Heart right ventricle (tissue), 16 donors: ENCODE measurements at regions of chr21 and their contacts with region 1.

Region 1: GRCh38 chr21:45309069-45309986 is 21.6 kb upstream of the POFUT2 start:
- DNase-seq: peak; percentile 77 to 81
- ATAC-seq: peak; percentile 25 to 69 (median 50)
- H3K4me3 ChIP-seq: no peak overlapping the region
- H3K27ac ChIP-seq: peak overlapping the region; percentile 31 to 89 (median 64)
- H3K4me1 ChIP-seq: peaks cover 14 to 45% (median 35%) of the 10 kb centered on the region in 9 donors
- H3K27me3 ChIP-seq: no peaks in the 10 kb centered on the region
- CTCF ChIP-seq: peak; percentile 54 to 83 (median 74)

Region 2: DNA sequence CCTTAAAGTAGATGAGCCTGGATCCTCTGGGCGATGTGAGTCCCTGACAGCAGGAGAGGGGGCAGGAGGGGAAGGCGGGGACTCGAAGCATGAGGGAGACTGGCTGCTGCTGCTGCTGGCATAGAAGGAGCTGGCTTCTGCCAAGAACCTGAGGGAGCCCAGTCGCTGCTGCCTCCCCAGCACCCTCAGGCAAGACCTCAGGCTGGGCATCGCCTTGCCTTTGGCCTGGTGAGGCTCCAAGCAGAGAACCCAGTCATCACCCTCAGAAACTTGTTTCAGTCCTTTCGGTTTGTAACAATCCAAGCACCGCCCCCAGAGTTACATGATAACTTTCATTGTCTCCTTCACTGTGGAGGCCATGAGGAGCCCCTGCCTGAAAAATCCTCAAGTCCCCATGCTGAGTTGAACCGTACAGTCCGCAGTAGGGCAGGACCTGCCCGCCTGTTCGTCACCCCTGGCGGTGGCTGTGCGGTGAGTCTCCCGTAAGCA is 60.4 kb before region 1 on chr21:
- intact Hi-C with region 1: no loop called
- DNase-seq: no peak
- ATAC-seq: peak; percentile 38 to 73 (median 58)
- H3K4me3 ChIP-seq: peak overlapping the region in 7 of 10 donors; percentile 17 to 39 (median 24)
- H3K27ac ChIP-seq: no peak overlapping the region
- H3K4me1 ChIP-seq: peaks cover 0 to 10% (median 8%) of the 10 kb centered on the region in 9 donors
- H3K27me3 ChIP-seq: peaks cover 0 to 32% (median 13%) of the 10 kb centered on the region in 7 donors
- CTCF ChIP-seq: no peak

Region 3: DNA sequence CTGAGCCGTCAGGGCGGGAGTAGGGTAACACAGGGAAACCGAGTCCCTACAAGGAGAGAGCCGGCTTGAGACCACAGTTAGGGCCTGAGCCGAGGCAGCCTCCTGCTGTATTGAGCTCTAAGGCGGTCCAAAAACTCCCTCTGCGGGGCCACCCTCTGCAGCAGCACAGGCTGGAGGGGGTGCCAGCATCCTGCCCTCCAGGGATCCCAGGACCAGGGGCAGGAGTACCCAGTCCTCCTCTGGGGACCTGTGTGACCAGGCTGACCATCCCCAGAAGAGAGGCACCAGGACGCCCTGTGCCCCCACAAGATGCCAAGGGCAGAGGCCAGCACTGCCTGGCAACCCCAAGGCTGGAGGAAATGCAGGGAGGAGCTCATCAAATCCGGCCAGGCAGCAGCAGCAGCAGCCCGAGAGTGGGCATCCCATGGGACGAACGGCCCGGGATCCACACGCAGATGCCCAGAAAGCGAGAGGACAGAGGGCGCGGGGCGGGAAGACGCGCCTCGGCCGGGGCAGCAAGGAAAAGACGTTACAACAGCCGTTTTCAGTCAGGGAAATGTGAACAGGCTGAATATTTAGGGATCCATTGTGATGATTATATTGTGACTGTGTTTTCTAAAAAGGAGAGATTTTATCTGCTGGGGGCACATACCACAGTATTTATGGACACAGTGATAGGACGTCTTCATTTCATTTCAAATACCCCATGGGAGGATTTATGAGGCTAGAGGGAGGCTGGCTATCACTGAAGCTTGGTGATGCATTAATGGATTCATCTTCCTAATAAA is 38.6 kb after region 1 on chr21:
- intact Hi-C with region 1: loop called in 2 of 10 experiments (anchors 5 to 10 kb)
- DNase-seq: peak in 1 of 2 donors; percentile 30
- ATAC-seq: no peak
- H3K4me3 ChIP-seq: no peak overlapping the region
- H3K27ac ChIP-seq: peak overlapping the region in 5 of 10 donors; percentile 30 to 81 (median 73)
- H3K4me1 ChIP-seq: peaks cover 11 to 55% (median 40%) of the 10 kb centered on the region in 9 donors
- H3K27me3 ChIP-seq: no peaks in the 10 kb centered on the region
- CTCF ChIP-seq: no peak

Region 4: DNA sequence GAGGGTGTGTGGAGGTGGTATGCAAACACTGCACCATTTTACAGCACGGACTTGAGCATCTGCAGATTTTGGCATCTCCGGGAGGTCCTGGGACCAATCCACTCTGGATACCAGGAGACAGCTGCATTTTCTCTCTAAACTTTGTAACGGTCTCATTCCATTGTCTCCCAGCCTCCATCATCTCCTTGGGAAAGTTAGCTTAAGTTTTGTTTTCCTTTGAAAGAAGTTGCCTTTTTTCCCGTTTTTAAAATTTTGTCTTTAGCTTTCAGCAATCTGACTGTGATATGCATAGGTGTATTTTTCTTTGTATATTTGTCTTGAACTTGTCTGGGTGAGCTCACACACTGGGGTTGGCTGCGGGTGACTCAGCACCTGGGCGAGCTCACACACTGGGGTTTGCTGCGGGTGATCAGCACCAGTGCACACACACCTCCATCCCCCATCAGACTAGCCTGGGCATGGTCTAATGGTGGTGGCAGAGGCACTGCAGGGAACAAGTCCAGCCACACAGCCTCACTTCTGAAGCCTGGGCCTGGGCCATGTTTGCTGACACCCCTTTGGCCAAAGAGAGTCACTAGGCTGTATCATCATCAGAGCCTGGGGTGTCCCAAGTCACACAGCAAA is 63.5 kb after region 1 on chr21:
- intact Hi-C with region 1: no loop called
- DNase-seq: peak in 1 of 2 donors; percentile 1
- ATAC-seq: no peak
- H3K4me3 ChIP-seq: no peak overlapping the region
- H3K27ac ChIP-seq: no peak overlapping the region
- H3K4me1 ChIP-seq: peaks cover 0 to 8% (median 0%) of the 10 kb centered on the region in 9 donors
- H3K27me3 ChIP-seq: no peaks in the 10 kb centered on the region
- CTCF ChIP-seq: no peak